BJ (cell line): ENCODE measurements at regions of chr1 and their contacts with region 1.

Region 1: DNA sequence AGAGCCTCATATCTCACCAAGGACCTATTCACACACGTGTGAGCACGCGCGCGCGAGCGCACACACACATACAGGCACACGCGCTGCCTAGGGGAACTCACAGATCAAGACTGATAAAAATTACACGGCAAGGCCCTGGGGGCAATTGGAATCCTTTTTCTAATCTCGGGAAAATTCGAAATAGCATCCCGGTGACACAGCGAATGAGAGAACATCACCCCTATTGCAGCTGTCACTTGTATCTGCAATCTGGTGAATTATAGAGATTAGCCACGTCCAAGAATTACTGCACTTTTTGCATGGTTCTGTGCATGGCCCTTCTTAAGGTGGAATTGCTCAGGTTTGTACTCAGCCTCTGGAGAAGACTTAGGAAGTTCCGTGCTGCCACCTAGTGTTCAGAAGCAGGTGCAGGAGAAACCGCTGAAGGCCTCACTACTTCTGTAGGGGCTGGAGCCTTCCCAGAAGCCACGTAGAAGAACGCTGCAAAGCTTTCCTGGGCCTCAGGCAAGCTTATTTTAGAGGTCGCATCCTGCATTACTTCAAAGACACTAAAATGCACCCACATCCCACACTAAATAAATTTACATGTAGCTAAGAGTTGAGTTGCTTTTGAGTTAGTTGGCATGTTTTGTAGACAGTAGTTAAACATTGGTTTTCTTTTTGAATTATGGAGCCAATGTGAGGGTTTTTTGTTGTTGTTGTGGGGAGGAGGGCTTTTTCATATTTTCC is 229.2 kb upstream of the CAMK1G start:
- DNase-seq: peak; percentile 31
- H3K4me3 ChIP-seq: no peak overlapping the region
- H3K27me3 ChIP-seq: no peaks in the 10 kb centered on the region
- CTCF ChIP-seq: peak; percentile 95

Region 2: DNA sequence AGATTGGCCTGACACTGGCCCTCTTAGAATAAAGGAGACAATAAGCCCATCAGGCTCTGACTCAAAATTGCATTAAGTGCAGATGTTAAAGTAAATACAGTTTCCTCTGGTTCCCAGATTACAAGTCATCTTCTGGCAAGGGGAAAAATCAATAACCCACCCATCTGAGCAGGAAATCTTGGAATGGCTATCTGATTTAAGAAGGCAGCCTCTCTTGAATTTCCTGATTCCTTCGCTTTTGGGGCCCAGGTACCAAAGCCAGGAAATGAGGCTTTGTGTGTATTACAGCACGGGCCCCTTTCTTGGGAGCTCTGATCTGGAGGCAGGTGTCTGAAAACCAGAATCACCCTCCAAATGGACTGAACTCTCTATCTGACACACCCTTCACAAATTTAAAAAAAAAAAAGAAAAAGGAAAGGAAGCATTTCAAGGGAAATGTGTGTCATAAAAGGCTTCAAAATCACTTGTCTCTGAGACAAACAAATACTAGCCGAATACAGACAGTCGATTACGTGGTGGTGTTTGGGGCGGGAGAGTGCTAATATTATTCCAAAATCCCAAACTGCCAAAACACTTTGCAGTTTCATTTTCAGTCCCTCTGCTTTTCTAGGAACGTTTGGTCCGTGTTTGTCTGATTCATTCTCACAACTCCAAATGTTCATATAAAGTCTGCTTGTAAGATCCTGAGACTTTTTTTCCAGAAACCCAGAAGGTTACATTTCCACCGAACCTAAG is 11.7 kb before region 1 on chr1:
- CTCF ChIA-PET with region 1: interaction called, 16 read pairs
- POLR2A ChIA-PET with region 1: no interaction called
- DNase-seq: no peak
- H3K4me3 ChIP-seq: no peak overlapping the region
- H3K27me3 ChIP-seq: no peaks in the 10 kb centered on the region; the same call in 1 of the 2 replicates
- CTCF ChIP-seq: no peak

Region 3: DNA sequence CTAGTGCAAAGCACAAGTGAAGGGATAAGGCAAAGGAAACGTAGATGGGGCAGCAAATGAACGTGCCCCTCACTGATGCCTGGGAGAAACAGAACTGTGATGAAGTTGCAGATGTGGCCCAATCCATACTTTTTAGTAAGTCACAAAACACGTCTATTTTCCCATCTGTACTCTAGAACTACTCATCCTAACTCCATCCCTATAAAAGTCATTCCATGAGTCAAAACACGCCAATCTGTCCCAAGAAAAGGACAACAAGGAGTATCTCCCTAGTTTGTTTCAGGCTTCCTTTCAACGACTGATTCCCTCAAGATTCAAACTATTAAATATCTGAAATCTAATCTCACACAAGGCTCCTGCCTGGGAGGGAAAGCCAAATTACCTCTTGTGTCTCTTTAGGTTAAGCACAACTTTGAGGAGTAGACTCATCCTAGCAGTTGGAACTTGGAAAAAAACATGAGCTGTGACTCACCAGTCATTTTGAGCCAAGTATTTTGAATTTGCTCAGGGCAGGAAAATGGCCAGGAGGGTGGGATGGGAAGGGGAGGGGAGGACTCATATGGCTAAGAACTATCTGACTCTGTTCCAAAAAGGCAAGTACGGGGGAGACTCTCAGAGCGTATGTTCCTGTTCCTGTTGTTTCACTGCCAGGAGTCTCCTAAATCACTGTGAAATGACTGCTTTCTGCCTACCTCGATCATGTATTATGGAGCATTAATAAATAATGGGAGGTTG is 14.8 kb after region 1 on chr1:
- CTCF ChIA-PET with region 1: interaction called, 35 read pairs
- POLR2A ChIA-PET with region 1: no interaction called
- DNase-seq: peak; percentile 86
- H3K4me3 ChIP-seq: no peak overlapping the region
- H3K27me3 ChIP-seq: no peaks in the 10 kb centered on the region
- CTCF ChIP-seq: no peak

Region 4: DNA sequence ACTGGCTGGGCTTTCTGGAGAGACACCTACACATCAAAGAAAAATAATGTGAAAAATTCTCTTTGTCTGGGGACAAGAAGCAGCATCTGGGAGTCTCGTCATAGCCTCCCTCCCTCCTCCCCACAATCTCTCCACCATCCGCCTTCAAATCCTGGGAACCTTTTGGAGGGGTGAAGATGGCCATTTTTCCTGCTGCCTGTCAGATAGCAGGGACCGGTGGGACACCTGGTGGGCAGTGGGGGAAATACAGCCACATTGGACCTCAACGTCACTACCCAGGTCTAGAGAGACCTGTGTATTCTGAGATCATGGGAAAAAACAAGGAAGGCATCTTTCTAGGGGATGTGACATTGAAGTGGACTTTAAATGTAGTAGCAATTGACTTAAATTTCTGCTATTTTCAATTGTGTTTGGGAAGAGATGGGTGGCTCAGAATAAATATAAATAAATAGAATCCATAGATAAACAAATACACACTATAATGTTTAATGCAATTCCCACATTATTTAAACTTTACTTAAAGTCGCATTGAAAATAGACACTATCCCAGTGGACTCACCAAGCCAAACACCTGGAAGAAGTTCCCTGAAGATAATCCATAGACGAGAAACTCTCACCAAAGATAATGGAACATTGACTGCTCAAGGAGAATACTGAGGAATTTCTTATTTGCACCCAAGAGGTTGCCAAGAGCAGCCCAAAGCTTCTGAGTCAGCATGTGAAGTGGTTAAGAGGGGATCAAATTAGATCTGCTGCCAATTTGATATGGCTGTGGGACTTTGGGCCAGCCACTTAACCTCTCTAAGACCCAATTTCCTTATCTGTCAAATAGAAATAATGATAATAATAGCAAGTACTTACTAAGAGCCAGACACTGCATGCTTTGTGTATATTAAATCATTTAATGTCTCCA is 81.6 kb after region 1 on chr1:
- CTCF ChIA-PET with region 1: interaction called, 19 read pairs
- POLR2A ChIA-PET with region 1: no interaction called
- DNase-seq: no peak
- H3K4me3 ChIP-seq: no peak overlapping the region
- H3K27me3 ChIP-seq: no peaks in the 10 kb centered on the region
- CTCF ChIP-seq: peak; percentile 88

Region 5: GRCh38 chr1:209651148-209651547 is 296.9 kb after region 1 on chr1:
- CTCF ChIA-PET with region 1: no interaction called
- POLR2A ChIA-PET with region 1: no interaction called
- DNase-seq: peak; percentile 19
- H3K4me3 ChIP-seq: no peak overlapping the region
- H3K27me3 ChIP-seq: no peaks in the 10 kb centered on the region; the same call in 1 of the 2 replicates
- CTCF ChIP-seq: no peak